Endothelial cell of umbilical vein (primary cell): ENCODE measurements at regions of chr2 and their contacts with region 1.

Region 1: GRCh38 chr2:169221745-169222369 is 140.5 kb downstream of the LRP2 start:
- DNase-seq: peak; percentile 63
- H3K4me3 ChIP-seq: no peak overlapping the region
- H3K27ac ChIP-seq: no peak overlapping the region
- H3K4me1 ChIP-seq: peaks cover 4% of the 10 kb centered on the region
- H3K27me3 ChIP-seq: no peaks in the 10 kb centered on the region
- CTCF ChIP-seq: peak; percentile 25 to 34
- POLR2A ChIP-seq: no peak

Region 2: GRCh38 chr2:168935810-168936581 is 285.9 kb before region 1 on chr2:
- CTCF ChIA-PET with region 1: interaction called, 10 read pairs
- POLR2A ChIA-PET with region 1: no interaction called
- dilution Hi-C with region 1: no loop called
- intact Hi-C with region 1: no loop called
- DNase-seq: peak; percentile 27
- H3K4me3 ChIP-seq: no peak overlapping the region
- H3K27ac ChIP-seq: no peak overlapping the region
- H3K4me1 ChIP-seq: no peaks in the 10 kb centered on the region
- H3K27me3 ChIP-seq: no peaks in the 10 kb centered on the region
- CTCF ChIP-seq: no peak
- POLR2A ChIP-seq: no peak

Region 3: GRCh38 chr2:168961450-168962229 is 260.2 kb before region 1 on chr2:
- CTCF ChIA-PET with region 1: interaction called, 13 read pairs
- POLR2A ChIA-PET with region 1: no interaction called
- dilution Hi-C with region 1: no loop called
- intact Hi-C with region 1: loop called (anchors 2 kb)
- DNase-seq: peak; percentile 89
- H3K4me3 ChIP-seq: no peak overlapping the region
- H3K27ac ChIP-seq: no peak overlapping the region
- H3K4me1 ChIP-seq: peaks cover 5% of the 10 kb centered on the region
- H3K27me3 ChIP-seq: no peaks in the 10 kb centered on the region
- CTCF ChIP-seq: peak; percentile 63 to 68
- POLR2A ChIP-seq: no peak

Region 4: GRCh38 chr2:169131587-169132512 is 90.0 kb before region 1 on chr2:
- CTCF ChIA-PET with region 1: interaction called, 32 read pairs
- POLR2A ChIA-PET with region 1: no interaction called
- dilution Hi-C with region 1: no loop called
- intact Hi-C with region 1: loop called (anchors 2 kb)
- DNase-seq: peak; percentile 77
- H3K4me3 ChIP-seq: no peak overlapping the region
- H3K27ac ChIP-seq: no peak overlapping the region
- H3K4me1 ChIP-seq: no peaks in the 10 kb centered on the region
- H3K27me3 ChIP-seq: no peaks in the 10 kb centered on the region
- CTCF ChIP-seq: peak; percentile 58
- POLR2A ChIP-seq: no peak

Region 5: DNA sequence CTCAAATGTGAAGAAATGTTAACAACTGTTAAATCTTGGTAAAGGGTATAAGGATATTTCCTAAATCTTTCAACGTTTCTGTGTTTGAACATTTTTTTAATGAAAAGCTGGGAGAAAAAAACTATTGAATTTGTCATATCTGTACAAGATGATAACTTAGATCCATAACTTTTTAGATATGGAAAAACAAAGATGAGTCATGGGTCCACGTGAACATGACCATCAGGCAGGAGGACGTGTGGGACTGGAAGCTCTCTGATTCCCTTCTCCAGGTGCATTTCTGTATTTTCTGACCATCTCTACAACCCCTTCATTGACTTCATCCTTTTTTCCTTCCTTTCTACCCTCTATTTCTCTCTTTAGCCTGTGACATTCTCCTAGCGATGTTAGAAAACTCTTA is 10.9 kb before region 1 on chr2:
- CTCF ChIA-PET with region 1: interaction called, 27 read pairs
- POLR2A ChIA-PET with region 1: no interaction called
- dilution Hi-C with region 1: no loop called
- intact Hi-C with region 1: no loop called
- DNase-seq: no peak
- H3K4me3 ChIP-seq: no peak overlapping the region
- H3K27ac ChIP-seq: no peak overlapping the region
- H3K4me1 ChIP-seq: no peaks in the 10 kb centered on the region
- H3K27me3 ChIP-seq: peaks cover 8 to 12% of the 10 kb centered on the region in 2 experiments
- CTCF ChIP-seq: no peak
- POLR2A ChIP-seq: no peak

Region 6: DNA sequence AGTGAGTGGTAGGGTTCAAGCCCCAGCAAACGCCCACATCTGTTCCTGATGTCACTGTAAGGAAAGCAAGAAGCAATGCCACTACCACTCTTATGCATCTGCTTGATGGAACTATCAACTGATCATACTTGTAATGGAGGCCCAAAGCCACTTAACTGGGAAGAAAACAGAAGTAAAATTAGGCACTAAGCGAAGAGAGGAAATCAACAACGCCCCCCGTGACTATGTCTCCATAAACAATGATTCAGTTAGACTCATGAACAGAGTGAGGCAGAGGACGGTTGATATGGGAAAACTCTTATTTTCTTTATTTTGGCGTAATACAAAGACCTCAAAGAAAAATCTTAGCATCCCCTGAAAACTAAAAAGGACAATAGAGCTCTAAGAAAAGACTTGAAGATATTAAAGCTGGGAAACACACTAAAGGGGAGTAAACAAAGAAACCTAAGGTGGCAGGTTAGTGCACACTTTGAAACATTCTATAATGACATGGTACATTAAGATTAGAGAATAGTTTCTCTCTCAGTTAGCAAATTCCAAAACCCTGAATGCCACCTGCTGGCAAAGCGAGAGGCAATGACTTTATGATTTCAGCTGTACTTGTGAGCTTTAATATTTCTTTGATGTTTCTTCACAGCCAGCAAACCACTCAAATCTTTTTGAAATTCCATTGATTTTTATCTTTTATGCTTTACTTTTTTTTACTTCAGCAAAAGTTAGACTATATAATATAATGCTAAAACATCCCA is 54.0 kb after region 1 on chr2:
- CTCF ChIA-PET with region 1: interaction called, 13 read pairs
- POLR2A ChIA-PET with region 1: no interaction called
- dilution Hi-C with region 1: no loop called
- intact Hi-C with region 1: no loop called
- DNase-seq: peak; percentile 10
- H3K4me3 ChIP-seq: no peak overlapping the region
- H3K27ac ChIP-seq: no peak overlapping the region
- H3K4me1 ChIP-seq: no peaks in the 10 kb centered on the region
- H3K27me3 ChIP-seq: peaks cover 0 to 2% of the 10 kb centered on the region in 2 experiments
- CTCF ChIP-seq: peak; percentile 10 to 11
- POLR2A ChIP-seq: no peak